ENCODE measurements at regions of chr18 and their contacts with region 1.

Region 1: DNA sequence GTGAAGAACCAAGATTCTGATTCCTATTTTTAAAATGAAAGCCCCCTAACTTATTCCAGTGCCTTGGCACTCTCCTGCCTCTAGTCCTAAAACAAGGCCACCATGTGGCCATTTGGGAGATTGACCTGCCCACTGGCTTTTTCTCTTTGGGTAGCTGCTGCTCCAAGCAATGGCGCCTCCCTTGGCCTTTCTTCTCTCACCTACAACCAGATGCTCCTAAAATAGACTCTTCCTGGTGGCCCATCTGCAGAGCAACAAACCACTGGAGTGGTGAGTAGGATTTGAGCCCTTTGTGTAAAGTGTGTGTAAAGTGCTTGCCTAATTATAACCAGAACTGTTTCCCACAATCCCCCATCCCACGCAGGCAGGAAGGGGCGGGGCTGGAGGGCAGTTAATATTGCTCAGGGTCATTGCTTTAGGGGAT is 114.2 kb downstream of the FHOD3 start:
- DNase-seq: peak in 1 of 2 experiments; percentile 70
- H3K4me3 ChIP-seq: no peak overlapping the region
- H3K27ac ChIP-seq: no peak overlapping the region
- H3K4me1 ChIP-seq: no peaks in the 10 kb centered on the region
- H3K27me3 ChIP-seq: no peaks in the 10 kb centered on the region
- CTCF ChIP-seq: peak; percentile 67 to 98 (median 77)
- EP300 ChIP-seq: no peak
- POLR2A ChIP-seq: no peak
- RAD21 ChIP-seq: peak; percentile 64 to 77

Region 2: GRCh38 chr18:36309436-36310391 is 102.0 kb before region 1 on chr18:
- CTCF ChIA-PET with region 1: interaction called, 12 read pairs
- POLR2A ChIA-PET with region 1: no interaction called
- DNase-seq: peak in 1 of 2 experiments; percentile 42
- H3K4me3 ChIP-seq: no peak overlapping the region
- H3K27ac ChIP-seq: no peak overlapping the region
- H3K4me1 ChIP-seq: peaks cover 2 to 10% (median 5%) of the 10 kb centered on the region in 4 experiments; a peak in 6 of 7 replicates
- H3K27me3 ChIP-seq: no peaks in the 10 kb centered on the region
- CTCF ChIP-seq: no peak
- EP300 ChIP-seq: no peak
- POLR2A ChIP-seq: no peak
- RAD21 ChIP-seq: no peak

Region 3: GRCh38 chr18:36386150-36386920 is 25.4 kb before region 1 on chr18:
- CTCF ChIA-PET with region 1: interaction called, 15 read pairs
- POLR2A ChIA-PET with region 1: no interaction called
- DNase-seq: no peak
- H3K4me3 ChIP-seq: no peak overlapping the region
- H3K27ac ChIP-seq: no peak overlapping the region
- H3K4me1 ChIP-seq: peaks cover 0 to 4% (median 0%) of the 10 kb centered on the region in 4 experiments; a peak in 2 of 7 replicates
- H3K27me3 ChIP-seq: no peaks in the 10 kb centered on the region
- CTCF ChIP-seq: no peak
- EP300 ChIP-seq: no peak
- POLR2A ChIP-seq: no peak
- RAD21 ChIP-seq: no peak

Measured in H1 (cell line).